ENCODE measurements at regions of chrX and their contacts with region 1.

Region 1: DNA sequence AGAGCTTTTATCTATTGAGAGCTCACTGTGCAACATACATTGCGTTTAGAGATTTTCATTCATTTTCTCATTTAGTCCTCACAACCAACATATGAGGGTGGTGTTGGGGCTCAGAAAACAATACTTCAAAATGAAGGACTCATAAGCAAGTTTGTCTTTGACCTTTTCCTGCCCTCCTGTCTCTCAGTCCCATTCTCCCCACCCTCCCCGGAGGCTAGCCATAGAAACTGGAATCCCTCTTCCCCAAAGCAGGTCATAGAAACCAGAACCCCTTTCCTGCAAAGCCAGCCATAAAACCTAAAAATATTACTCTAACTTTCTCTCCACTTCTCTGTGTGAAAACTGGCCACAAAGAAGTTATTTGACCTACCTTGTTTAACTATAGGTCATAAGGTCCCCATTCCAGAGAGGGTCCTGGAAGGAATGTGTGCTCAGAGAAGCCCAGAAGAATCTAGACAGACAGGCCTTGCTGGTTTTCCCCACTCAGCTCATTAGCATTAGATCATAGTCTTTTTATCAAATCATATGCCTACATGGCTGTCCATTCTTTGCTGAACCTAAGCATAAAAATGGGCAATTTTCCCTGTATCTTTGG is 52.7 kb upstream of the TEX13A start:
- DNase-seq: peak; percentile 58 to 59
- H3K4me3 ChIP-seq: no peak overlapping the region
- H3K4me3 Mint-ChIP-seq: peak overlapping the region; percentile 48
- H3K27ac Mint-ChIP-seq: peak overlapping the region; percentile 85
- H3K4me1 ChIP-seq: peaks cover 15% of the 10 kb centered on the region
- H3K4me1 Mint-ChIP-seq: peaks cover 7% of the 10 kb centered on the region
- H3K27me3 ChIP-seq: no peaks in the 10 kb centered on the region
- H3K27me3 Mint-ChIP-seq: no peaks in the 10 kb centered on the region
- CTCF ChIP-seq: no peak

Region 2: DNA sequence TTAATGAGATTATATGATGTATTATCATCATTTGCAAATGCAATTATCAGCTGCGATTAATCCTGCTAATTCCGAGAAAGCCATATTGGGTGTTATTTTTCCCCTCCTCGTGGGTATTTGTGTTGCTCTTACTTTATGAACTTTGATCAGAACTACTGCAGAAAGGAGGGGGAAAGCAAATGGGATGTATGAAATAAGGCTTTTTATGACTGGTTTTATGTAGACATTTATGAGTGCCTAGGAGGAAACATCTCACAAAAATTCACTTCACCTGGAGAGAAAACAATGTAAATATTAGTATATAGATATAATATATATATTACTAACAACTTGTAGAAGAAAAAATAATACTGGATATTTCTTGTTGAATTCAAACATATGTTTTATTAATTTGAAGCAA is 267.1 kb before region 1 on chrX:
- CTCF ChIA-PET with region 1: no interaction called
- POLR2A ChIA-PET with region 1: no interaction called
- intact Hi-C with region 1: no loop called
- DNase-seq: no peak
- H3K4me3 ChIP-seq: no peak overlapping the region
- H3K4me3 Mint-ChIP-seq: no peak overlapping the region
- H3K27ac Mint-ChIP-seq: no peak overlapping the region
- H3K4me1 ChIP-seq: no peaks in the 10 kb centered on the region
- H3K4me1 Mint-ChIP-seq: no peaks in the 10 kb centered on the region
- H3K27me3 ChIP-seq: no peaks in the 10 kb centered on the region
- H3K27me3 Mint-ChIP-seq: no peaks in the 10 kb centered on the region
- CTCF ChIP-seq: no peak

Region 3: DNA sequence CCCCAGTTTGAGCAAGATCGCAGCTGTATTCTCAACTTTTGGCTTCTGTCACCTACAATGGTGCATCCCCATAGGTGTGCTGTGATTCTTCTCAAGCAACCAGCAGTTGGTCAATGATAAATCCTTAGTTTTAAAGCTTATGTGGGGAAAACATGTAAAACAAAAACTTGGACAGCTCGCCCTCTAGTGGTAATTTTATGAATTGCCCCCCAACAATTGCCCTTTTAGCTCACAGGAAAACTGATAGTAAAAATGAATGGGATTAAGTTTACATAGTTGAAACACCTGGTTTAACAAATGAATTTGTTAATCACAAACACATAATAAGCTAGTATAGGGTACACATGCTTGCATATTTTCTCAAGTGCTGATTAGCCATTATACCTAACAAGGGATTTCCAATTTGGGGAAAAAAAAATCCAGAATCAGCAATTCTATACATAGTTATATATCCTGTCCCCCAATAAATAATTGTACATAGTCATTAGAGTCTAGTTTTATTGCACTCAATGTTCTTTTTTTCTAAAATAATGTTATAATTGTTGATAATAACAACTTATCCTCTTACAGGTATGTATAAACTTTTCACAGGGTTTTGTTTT is 82.9 kb before region 1 on chrX:
- CTCF ChIA-PET with region 1: no interaction called
- POLR2A ChIA-PET with region 1: no interaction called
- intact Hi-C with region 1: loop called (anchors 10 kb)
- DNase-seq: peak in 1 of 2 experiments; percentile 30
- H3K4me3 ChIP-seq: no peak overlapping the region
- H3K4me3 Mint-ChIP-seq: no peak overlapping the region
- H3K27ac Mint-ChIP-seq: no peak overlapping the region
- H3K4me1 ChIP-seq: no peaks in the 10 kb centered on the region
- H3K4me1 Mint-ChIP-seq: no peaks in the 10 kb centered on the region
- H3K27me3 ChIP-seq: no peaks in the 10 kb centered on the region
- H3K27me3 Mint-ChIP-seq: no peaks in the 10 kb centered on the region
- CTCF ChIP-seq: peak; percentile 52 to 66

Region 4: GRCh38 chrX:105228602-105229001 is 44.6 kb before region 1 on chrX:
- CTCF ChIA-PET with region 1: no interaction called
- POLR2A ChIA-PET with region 1: no interaction called
- intact Hi-C with region 1: loop called (anchors 1 kb)
- DNase-seq: no peak
- H3K4me3 ChIP-seq: no peak overlapping the region
- H3K4me3 Mint-ChIP-seq: no peak overlapping the region
- H3K27ac Mint-ChIP-seq: no peak overlapping the region
- H3K4me1 ChIP-seq: peaks cover 17% of the 10 kb centered on the region
- H3K4me1 Mint-ChIP-seq: no peaks in the 10 kb centered on the region
- H3K27me3 ChIP-seq: no peaks in the 10 kb centered on the region
- H3K27me3 Mint-ChIP-seq: no peaks in the 10 kb centered on the region
- CTCF ChIP-seq: no peak